Spleen (tissue), 13 donors: ENCODE measurements at regions of chr2 and their contacts with region 1.

Region 1: GRCh38 chr2:232327105-232328041 is 51.2 kb upstream of the ALPP start:
- DNase-seq: peak; percentile 95
- H3K4me3 ChIP-seq: no peak overlapping the region
- H3K27ac ChIP-seq: no peak overlapping the region
- H3K4me1 ChIP-seq: peaks cover 0 to 33% (median 2%) of the 10 kb centered on the region in 6 donors
- H3K27me3 ChIP-seq: no peaks in the 10 kb centered on the region
- CTCF ChIP-seq: peak; percentile 76 to 98 (median 92)
- POLR2A ChIP-seq: no peak

Region 2: GRCh38 chr2:231905026-231905425 is 422.3 kb before region 1 on chr2:
- intact Hi-C with region 1: loop called (anchors 5 kb)
- DNase-seq: peak; percentile 56
- H3K4me3 ChIP-seq: no peak overlapping the region
- H3K27ac ChIP-seq: no peak overlapping the region
- H3K4me1 ChIP-seq: no peaks in the 10 kb centered on the region
- H3K27me3 ChIP-seq: peaks cover 0 to 28% (median 0%) of the 10 kb centered on the region in 7 donors
- CTCF ChIP-seq: peak in 1 of 11 experiments; percentile 1
- POLR2A ChIP-seq: no peak

Region 3: GRCh38 chr2:231925303-231926179 is 401.8 kb before region 1 on chr2:
- intact Hi-C with region 1: loop called (anchors 5 kb)
- DNase-seq: peak; percentile 93
- H3K4me3 ChIP-seq: peak overlapping the region; percentile 16 to 71 (median 43)
- H3K27ac ChIP-seq: no peak overlapping the region
- H3K4me1 ChIP-seq: peaks cover 20 to 32% (median 27%) of the 10 kb centered on the region in 6 donors
- H3K27me3 ChIP-seq: peaks cover 0 to 97% (median 51%) of the 10 kb centered on the region in 7 donors
- CTCF ChIP-seq: peak; percentile 29 to 97 (median 94)
- POLR2A ChIP-seq: no peak

Region 4: DNA sequence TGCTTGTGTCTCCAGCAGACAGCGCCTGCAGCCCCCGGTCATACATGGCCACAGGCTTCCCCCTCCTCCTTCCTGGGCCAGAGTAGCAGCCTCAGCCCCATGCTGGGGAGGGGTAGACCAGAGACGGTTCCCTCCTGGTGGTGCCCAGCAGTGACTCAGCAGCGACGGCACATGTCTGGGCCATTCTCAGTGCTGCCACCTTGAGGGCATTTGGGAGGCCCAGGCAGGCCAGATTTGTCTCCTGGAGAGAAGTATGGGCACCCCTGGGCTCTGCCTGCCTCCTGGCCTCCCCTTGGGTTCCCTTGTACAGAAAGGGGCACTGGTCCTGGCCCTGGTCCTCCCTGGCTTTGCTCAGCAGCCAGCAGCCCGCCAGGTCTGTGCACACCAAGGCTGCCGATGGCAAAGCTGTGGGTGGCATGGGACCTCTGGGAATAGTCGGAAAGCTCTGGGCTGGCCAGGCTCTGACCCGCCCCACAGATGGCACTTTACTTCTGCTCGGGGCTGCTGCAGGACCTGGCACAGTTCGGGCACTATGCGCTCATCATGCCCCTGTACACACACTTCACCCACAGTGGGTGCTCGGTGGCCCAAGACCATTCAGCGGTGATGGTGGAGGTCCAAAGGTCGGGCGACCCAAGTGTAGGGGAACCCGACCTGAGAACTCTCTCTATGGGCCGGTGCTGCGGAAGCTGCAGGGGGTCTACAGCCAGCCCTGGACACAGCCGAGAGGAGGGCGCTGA is 117.2 kb after region 1 on chr2:
- intact Hi-C with region 1: loop called (anchors 5 kb)
- DNase-seq: no peak
- H3K4me3 ChIP-seq: no peak overlapping the region
- H3K27ac ChIP-seq: no peak overlapping the region
- H3K4me1 ChIP-seq: peaks cover 0 to 22% (median 4%) of the 10 kb centered on the region in 6 donors
- H3K27me3 ChIP-seq: peaks cover 0 to 19% (median 0%) of the 10 kb centered on the region in 7 donors
- CTCF ChIP-seq: peak in 9 of 11 experiments; percentile 25 to 77 (median 56)
- POLR2A ChIP-seq: no peak